AG04450 (cell line): ENCODE measurements at regions of chr11 and their contacts with region 1.

Region 1: DNA sequence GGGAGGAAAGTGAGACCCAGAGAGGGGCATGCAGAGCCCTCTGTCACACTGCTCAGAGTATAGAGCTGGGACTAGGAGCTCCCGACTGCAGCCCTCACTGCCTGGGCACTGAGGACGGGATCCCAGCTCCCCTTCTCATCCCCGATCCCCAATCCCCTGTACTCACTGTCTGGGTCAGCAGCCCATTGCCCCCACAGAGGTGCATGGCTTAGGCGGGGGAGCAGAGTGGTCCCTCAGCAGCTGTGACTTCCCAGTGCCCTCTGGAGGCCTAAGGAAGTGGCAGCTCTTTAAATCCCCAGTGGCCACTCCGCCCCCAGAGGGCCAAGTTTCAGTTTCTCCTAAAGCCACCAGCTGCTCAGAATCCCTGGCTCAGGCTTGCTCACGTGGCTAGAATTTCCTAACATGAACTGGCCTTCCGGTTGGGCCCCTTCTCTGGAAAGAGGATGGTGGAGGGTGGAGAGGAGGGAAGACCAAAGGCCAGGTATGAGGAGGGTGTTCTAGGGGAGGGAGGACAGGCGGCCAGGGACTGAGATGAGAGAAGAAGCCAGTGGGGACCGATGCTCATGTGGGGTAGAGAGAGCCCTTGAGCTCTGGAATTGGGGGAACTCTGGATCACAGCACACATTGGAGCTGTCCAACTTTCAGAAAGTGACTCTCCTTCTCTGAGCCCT is at the start of gene BATF2:
- DNase-seq: no peak
- H3K4me3 ChIP-seq: peak within 1 kb of the TSS; percentile 58
- H3K27ac ChIP-seq: peak within 1 kb of the TSS; percentile 13
- H3K27me3 ChIP-seq: no peaks in the 10 kb centered on the region
- CTCF ChIP-seq: peak; percentile 58
- polyA plus RNA-seq, gene BATF2: 1.5 and 2.1 TPM in 2 replicates

Region 2: GRCh38 chr11:64930321-64930720 is 66.5 kb before region 1 on chr11:
- CTCF ChIA-PET with region 1: no interaction called
- POLR2A ChIA-PET with region 1: no interaction called
- DNase-seq: no peak
- H3K4me3 ChIP-seq: no peak overlapping the region
- H3K27ac ChIP-seq: no peak overlapping the region
- H3K27me3 ChIP-seq: no peaks in the 10 kb centered on the region
- CTCF ChIP-seq: no peak

Region 3: DNA sequence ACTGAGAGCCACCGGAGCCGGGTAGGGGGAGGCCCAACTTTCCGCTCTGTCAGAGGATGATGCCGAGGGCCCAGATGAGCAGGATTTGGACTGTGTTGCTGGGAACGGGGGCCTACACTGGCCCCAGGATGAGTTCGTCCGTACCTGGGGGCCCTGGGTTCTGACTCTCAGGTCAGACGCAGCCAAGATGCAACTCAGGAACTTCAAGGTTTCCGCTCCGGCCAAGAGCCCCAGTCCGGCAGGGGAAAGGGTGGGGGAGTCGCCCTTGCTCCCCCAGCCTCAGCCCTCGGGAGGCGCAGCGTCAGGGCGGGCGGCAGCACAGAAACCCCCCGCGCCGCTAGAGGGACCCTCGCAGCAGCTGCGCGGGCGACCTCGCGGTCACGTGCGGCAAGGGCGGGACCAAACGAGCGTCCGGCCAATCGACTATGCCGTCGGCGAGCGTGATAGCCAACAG is 16.9 kb after region 1 on chr11:
- CTCF ChIA-PET with region 1: interaction called, 23 read pairs
- POLR2A ChIA-PET with region 1: no interaction called
- DNase-seq: peak; percentile 70
- H3K4me3 ChIP-seq: peak overlapping the region; percentile 86
- H3K27ac ChIP-seq: peak overlapping the region; percentile 99
- H3K27me3 ChIP-seq: no peaks in the 10 kb centered on the region
- CTCF ChIP-seq: no peak; the same call in 1 of the 2 replicates

Region 4: DNA sequence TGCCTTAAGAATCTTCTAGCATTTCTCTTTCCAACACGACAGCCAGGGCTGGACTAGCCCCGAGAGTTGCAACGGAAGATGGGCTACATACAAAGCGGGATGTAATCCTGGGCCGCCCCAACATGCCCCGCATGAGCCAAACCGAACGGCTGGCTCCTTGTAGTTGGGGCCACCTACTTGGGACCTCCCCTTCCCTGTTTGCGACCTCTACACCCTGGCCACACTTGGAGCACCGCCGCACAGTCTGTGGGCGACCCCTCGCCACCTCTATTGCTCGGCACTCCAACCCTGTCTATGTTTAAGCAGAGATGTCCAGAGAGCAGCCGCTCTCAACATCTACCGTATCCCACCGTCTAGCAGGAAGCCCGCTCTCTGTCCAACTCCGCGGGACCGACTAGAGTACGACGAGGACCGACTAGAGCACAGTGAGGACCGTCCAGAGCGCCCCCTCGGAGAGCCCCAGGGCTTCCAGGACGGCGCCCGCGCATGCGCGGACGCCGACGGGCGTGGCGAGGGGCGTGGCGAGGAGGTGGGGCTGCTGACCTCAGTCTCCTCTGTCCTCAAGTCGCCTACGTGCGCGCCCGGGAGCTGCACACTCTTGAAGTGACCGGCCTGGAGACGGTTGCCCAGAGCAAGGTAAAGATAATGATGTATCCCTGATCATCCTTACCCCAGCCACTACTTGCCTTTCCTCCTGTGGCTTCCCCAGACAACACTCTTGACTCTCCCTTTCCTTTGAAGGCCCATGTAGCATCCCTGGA is 458.0 kb after region 1 on chr11:
- CTCF ChIA-PET with region 1: no interaction called
- POLR2A ChIA-PET with region 1: no interaction called
- DNase-seq: no peak
- H3K4me3 ChIP-seq: peak overlapping the region; percentile 67
- H3K27ac ChIP-seq: peak overlapping the region; percentile 82
- H3K27me3 ChIP-seq: no peaks in the 10 kb centered on the region
- CTCF ChIP-seq: no peak